ENCODE measurements at regions of chr13 and their contacts with region 1.

Region 1: GRCh38 chr13:45623515-45624090 is 8.1 kb upstream of the ERICH6B start:
- DNase-seq: peak in 4 of 9 donors; percentile 9 to 38 (median 20)
- ATAC-seq: no peak
- H3K4me3 ChIP-seq: no peak overlapping the region
- H3K4me3 Mint-ChIP-seq: no peak overlapping the region
- H3K27ac ChIP-seq: no peak overlapping the region
- H3K27ac Mint-ChIP-seq: no peak overlapping the region
- H3K4me1 ChIP-seq: no peaks in the 10 kb centered on the region
- H3K4me1 Mint-ChIP-seq: peaks cover 0 to 1% (median 0%) of the 10 kb centered on the region in 7 donors
- H3K27me3 ChIP-seq: no peaks in the 10 kb centered on the region
- H3K27me3 Mint-ChIP-seq: peaks cover 27 to 49% (median 38%) of the 10 kb centered on the region in 5 donors

Region 2: DNA sequence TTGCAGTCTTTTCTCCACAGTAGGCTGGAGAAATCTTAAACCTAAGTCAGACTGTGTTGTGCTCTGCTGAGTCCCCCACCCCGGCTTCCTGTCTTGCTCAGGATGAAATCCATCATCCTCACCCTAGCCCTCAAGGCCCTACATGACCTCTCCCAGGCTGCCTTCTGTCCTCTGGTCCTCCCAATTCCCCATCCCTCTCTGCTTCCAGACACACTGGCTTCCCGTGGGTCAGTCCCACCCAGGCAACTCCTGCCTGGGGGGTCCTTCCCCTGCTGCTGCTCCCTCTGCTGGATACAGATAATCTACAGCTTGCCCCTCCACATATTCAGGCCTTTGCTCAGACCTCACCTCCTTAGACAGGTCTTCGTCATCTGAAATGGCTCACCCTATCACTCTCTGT is 60.1 kb after region 1 on chr13:
- CTCF ChIA-PET with region 1: interaction called, 3 read pairs
- POLR2A ChIA-PET with region 1: no interaction called
- intact Hi-C with region 1: loop called in 1 of 2 experiments (anchors 1 kb)
- DNase-seq: peak in 1 of 9 donors; percentile 5
- ATAC-seq: no peak
- H3K4me3 ChIP-seq: no peak overlapping the region
- H3K4me3 Mint-ChIP-seq: no peak overlapping the region
- H3K27ac ChIP-seq: no peak overlapping the region
- H3K27ac Mint-ChIP-seq: peak overlapping the region in 2 of 9 donors; percentile 22 to 32
- H3K4me1 ChIP-seq: no peaks in the 10 kb centered on the region
- H3K4me1 Mint-ChIP-seq: peaks cover 0 to 7% (median 2%) of the 10 kb centered on the region in 7 donors
- H3K27me3 ChIP-seq: no peaks in the 10 kb centered on the region
- H3K27me3 Mint-ChIP-seq: peaks cover 0 to 3% (median 0%) of the 10 kb centered on the region in 5 donors

Region 3: DNA sequence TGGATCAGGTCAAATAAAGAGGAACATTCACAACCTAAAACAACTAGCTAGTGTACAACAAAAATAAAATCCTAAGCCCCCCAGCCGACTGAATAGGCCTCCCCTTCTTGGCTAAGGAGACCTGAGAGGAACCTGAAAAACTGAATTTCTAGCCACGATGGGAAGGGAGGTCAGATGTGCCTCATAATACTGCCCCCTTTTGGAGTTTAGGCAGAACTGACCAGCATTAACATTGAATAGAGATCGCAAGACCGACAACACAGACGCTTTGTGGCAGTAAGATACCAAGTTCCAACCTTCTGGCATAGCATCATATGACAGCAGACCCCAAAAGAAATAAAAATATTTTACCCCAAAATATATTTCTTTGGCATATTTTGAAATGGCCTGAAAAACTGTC is 94.5 kb after region 1 on chr13:
- CTCF ChIA-PET with region 1: interaction called, 6 read pairs
- POLR2A ChIA-PET with region 1: no interaction called
- intact Hi-C with region 1: loop called (anchors 1 kb)
- DNase-seq: peak in 1 of 9 donors; percentile 15
- ATAC-seq: no peak
- H3K4me3 ChIP-seq: no peak overlapping the region
- H3K4me3 Mint-ChIP-seq: no peak overlapping the region
- H3K27ac ChIP-seq: no peak overlapping the region
- H3K27ac Mint-ChIP-seq: no peak overlapping the region
- H3K4me1 ChIP-seq: no peaks in the 10 kb centered on the region
- H3K4me1 Mint-ChIP-seq: no peaks in the 10 kb centered on the region
- H3K27me3 ChIP-seq: no peaks in the 10 kb centered on the region
- H3K27me3 Mint-ChIP-seq: peaks cover 0 to 7% (median 0%) of the 10 kb centered on the region in 5 donors

Region 4: GRCh38 chr13:45879670-45880069 is 256.1 kb after region 1 on chr13:
- CTCF ChIA-PET with region 1: no interaction called
- POLR2A ChIA-PET with region 1: no interaction called
- intact Hi-C with region 1: loop called in 1 of 2 experiments (anchors 2 kb)
- DNase-seq: peak in 3 of 9 donors; percentile 2 to 21 (median 3)
- ATAC-seq: no peak
- H3K4me3 ChIP-seq: no peak overlapping the region
- H3K4me3 Mint-ChIP-seq: no peak overlapping the region
- H3K27ac ChIP-seq: no peak overlapping the region
- H3K27ac Mint-ChIP-seq: no peak overlapping the region
- H3K4me1 ChIP-seq: no peaks in the 10 kb centered on the region
- H3K4me1 Mint-ChIP-seq: no peaks in the 10 kb centered on the region
- H3K27me3 ChIP-seq: no peaks in the 10 kb centered on the region
- H3K27me3 Mint-ChIP-seq: peaks cover 0 to 21% (median 7%) of the 10 kb centered on the region in 5 donors

Region 5: GRCh38 chr13:46288570-46289259 is 665.1 kb after region 1 on chr13:
- CTCF ChIA-PET with region 1: no interaction called
- POLR2A ChIA-PET with region 1: no interaction called
- intact Hi-C with region 1: loop called in 1 of 2 experiments (anchors 1 kb)
- DNase-seq: peak in 7 of 9 donors; percentile 46 to 75 (median 70)
- ATAC-seq: peak; percentile 84
- H3K4me3 ChIP-seq: no peak overlapping the region
- H3K4me3 Mint-ChIP-seq: no peak overlapping the region
- H3K27ac ChIP-seq: no peak overlapping the region
- H3K27ac Mint-ChIP-seq: peak overlapping the region in 3 of 9 donors; percentile 8 to 18 (median 16)
- H3K4me1 ChIP-seq: peaks cover 0 to 17% of the 10 kb centered on the region in 2 donors
- H3K4me1 Mint-ChIP-seq: peaks cover 4 to 29% (median 15%) of the 10 kb centered on the region in 7 donors
- H3K27me3 ChIP-seq: no peaks in the 10 kb centered on the region
- H3K27me3 Mint-ChIP-seq: no peaks in the 10 kb centered on the region

Measured in naive thymus-derived CD4-positive, alpha-beta T cell (primary cell).